OCI-LY7 (cell line): ENCODE measurements at regions of chr14 and their contacts with region 1.

Region 1: GRCh38 chr14:24734878-24735500 is 101.0 kb upstream of the GZMB start:
- DNase-seq: peak; percentile 63
- H3K4me3 ChIP-seq: no peak overlapping the region
- H3K27ac ChIP-seq: no peak overlapping the region
- H3K4me1 ChIP-seq: no peaks in the 10 kb centered on the region
- CTCF ChIP-seq: peak; percentile 94

Region 2: GRCh38 chr14:24721775-24722174 is 13.2 kb before region 1 on chr14:
- CTCF ChIA-PET with region 1: no interaction called
- POLR2A ChIA-PET with region 1: no interaction called
- intact Hi-C with region 1: no loop called
- DNase-seq: no peak
- H3K4me3 ChIP-seq: no peak overlapping the region
- H3K27ac ChIP-seq: no peak overlapping the region
- H3K4me1 ChIP-seq: no peaks in the 10 kb centered on the region
- CTCF ChIP-seq: no peak

Region 3: DNA sequence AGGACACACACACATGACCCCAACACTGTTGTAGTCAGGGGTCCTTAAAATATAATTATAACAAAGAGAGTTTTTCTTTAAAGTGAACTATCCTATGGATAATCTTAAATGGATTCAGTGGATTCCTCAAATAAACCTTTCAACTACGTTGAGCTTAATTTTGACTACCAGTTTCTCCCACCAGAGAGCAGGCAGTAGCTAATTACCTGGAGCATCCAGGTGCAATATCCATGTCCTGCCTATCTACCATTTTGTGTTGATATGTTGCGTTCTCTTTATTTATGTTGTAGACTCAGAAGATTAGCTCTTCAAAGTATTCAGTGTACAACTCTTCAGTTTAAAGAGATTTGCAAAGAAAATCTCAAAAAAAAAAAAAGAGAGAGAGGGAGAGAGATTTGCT is 26.2 kb after region 1 on chr14:
- CTCF ChIA-PET with region 1: no interaction called
- POLR2A ChIA-PET with region 1: no interaction called
- intact Hi-C with region 1: no loop called
- DNase-seq: no peak
- H3K4me3 ChIP-seq: no peak overlapping the region
- H3K27ac ChIP-seq: no peak overlapping the region
- H3K4me1 ChIP-seq: no peaks in the 10 kb centered on the region
- CTCF ChIP-seq: no peak

Region 4: GRCh38 chr14:25132732-25133422 is 397.9 kb after region 1 on chr14:
- CTCF ChIA-PET with region 1: no interaction called
- POLR2A ChIA-PET with region 1: no interaction called
- intact Hi-C with region 1: loop called (anchors 2 kb)
- DNase-seq: peak; percentile 62
- H3K4me3 ChIP-seq: no peak overlapping the region
- H3K27ac ChIP-seq: no peak overlapping the region
- H3K4me1 ChIP-seq: no peaks in the 10 kb centered on the region
- CTCF ChIP-seq: peak; percentile 86

Region 5: DNA sequence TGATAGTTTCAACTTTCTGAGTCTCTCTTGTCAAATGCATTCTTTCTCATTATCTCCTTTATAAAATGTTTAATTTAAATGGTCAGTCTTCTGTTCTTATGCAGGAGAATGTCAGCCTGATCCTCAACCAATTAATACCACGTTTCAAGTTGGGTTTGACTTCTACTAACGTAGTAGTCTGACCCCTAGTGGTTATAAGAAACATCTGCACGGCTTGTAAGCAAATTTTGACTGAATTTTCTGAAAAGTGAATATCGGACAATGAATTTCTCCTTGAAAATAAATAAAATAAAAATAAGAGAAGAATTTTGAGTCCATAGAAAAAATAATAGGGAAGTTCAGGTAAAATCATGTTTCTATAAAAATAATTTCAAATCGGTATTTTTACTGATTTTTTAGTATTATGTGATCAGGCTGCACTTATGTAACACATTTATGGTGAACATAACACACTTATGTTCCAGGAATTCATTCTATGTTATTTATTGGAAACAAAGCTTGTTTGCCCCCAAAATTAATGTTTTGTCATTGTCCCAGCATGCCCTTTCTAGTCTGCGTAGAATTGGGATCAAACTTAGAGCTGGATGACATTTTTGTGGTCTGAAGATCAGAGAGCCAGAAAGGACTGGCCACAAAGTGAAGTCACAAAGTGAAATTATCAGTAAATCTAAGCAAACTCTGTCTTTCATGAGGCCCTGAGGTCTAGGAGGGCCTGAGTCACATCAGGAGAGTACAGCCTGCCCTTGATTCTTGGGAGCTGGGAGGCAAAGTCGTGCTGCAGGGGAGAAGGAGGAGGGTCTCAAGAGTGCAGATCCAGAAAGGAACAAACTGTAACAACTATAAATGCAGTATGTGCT is 416.2 kb after region 1 on chr14:
- CTCF ChIA-PET with region 1: no interaction called
- POLR2A ChIA-PET with region 1: interaction called, 4 read pairs
- intact Hi-C with region 1: loop called (anchors 2 kb)
- DNase-seq: peak; percentile 55
- H3K4me3 ChIP-seq: no peak overlapping the region
- H3K27ac ChIP-seq: no peak overlapping the region
- H3K4me1 ChIP-seq: no peaks in the 10 kb centered on the region
- CTCF ChIP-seq: peak; percentile 94